Right cardiac atrium (tissue), 5 donors: ENCODE measurements at regions of chr7 and their contacts with region 1.

Region 1: DNA sequence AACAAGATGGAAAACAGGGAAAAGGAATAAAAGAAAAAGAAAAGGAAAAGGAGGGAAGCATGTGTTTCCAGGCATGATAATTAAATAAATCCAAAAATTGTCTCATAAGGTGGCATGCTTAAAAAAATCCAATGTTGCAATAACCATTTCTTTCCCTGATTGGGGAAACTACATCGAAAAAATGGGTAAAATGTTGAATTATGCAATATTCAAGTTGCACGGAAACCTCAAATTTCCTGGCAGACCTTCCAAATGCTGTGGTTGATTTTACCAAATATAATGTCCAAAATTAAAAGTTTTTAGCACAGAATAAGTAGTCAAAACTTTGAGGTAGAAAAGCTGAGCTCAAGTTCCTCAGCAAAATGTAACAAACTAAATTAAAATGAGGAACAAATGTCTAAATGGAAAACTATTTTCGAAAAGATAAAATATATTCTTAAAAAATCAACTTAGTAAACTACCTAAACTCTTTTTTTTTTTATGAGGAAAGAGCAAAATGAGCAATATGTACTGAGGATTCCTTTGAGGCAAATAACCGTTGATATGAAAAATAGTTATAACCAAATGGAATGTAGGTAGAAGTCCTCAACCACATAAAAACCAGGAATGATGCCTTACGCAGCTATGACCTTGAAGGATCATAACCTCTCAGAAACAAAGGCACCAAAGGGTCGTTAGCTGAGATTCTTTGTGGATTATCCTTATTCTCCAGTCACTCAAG is 52.6 kb downstream of the MACC1 start:
- DNase-seq: no peak
- ATAC-seq: no peak
- H3K4me3 ChIP-seq: no peak overlapping the region
- H3K27ac ChIP-seq: peak overlapping the region; percentile 7
- H3K4me1 ChIP-seq: no peaks in the 10 kb centered on the region
- H3K27me3 ChIP-seq: no peaks in the 10 kb centered on the region

Region 2: GRCh38 chr7:19939746-19940145 is 224.8 kb before region 1 on chr7:
- intact Hi-C with region 1: no loop called
- DNase-seq: no peak
- ATAC-seq: no peak
- H3K4me3 ChIP-seq: no peak overlapping the region
- H3K27ac ChIP-seq: no peak overlapping the region
- H3K4me1 ChIP-seq: no peaks in the 10 kb centered on the region
- H3K27me3 ChIP-seq: no peaks in the 10 kb centered on the region

Region 3: DNA sequence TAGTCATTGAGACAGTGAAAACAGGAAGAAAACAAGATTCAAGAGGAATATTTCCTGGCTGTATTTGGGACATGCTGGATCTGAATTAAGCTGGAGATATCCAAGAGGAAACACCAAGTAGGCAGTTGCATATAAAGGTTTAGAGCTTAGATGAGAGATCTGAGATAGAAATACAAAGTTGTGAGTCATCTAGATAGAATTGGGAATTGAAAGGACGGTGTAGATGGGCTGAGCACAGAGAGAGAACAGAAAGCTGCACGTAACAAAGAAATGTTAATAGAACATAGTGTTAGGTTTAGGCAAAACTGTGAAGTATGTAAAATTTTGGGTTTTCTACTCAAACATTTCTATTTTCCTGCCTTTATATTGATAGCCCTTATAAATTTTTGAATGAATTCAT is 172.6 kb before region 1 on chr7:
- intact Hi-C with region 1: no loop called
- DNase-seq: no peak
- ATAC-seq: no peak
- H3K4me3 ChIP-seq: no peak overlapping the region
- H3K27ac ChIP-seq: no peak overlapping the region
- H3K4me1 ChIP-seq: no peaks in the 10 kb centered on the region
- H3K27me3 ChIP-seq: no peaks in the 10 kb centered on the region

Region 4: DNA sequence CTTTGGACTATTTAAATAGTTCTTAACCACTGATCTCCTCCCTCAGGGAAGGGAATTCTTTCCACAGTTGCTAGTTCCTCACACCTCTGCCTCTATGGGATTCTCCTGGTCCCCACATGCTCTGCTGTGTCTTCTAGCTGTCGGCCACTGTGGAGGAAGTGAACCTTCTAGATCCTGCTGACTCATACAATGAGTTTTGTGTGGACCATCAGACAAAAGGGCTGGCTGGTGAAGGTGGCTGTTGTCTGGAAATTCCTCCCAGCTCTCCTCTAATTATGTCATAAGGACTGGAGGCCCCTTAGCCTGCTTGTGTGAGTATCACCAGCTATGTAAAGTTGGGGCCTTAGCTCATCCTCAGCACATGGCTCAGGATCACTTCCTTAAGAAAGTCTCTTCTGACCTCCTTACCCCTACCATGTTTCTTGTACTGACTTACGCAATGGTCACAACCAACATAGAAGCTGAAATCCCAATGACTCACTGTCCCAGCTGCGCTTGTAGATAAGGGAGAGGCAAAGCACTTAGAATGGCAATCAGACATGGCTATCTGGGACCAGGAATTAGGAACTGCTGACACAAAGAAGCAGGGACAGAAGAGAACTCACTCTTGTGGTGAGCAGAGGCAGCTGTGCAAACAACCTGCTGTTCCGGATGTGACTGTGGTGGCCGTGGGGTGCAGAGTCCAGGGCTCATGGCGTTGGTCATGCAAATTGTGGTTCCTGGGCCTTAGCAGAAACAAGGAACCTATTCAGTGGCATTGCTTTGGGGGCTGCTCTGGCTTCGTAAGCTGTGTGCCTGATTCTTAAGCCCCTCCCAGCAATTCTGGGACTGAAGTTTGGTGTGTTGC is 55.1 kb after region 1 on chr7:
- intact Hi-C with region 1: loop called in 1 of 4 experiments (anchors 2 kb)
- DNase-seq: peak; percentile 63 to 81 (median 78)
- ATAC-seq: peak; percentile 93 to 95
- H3K4me3 ChIP-seq: no peak overlapping the region
- H3K27ac ChIP-seq: peak overlapping the region; percentile 62
- H3K4me1 ChIP-seq: no peaks in the 10 kb centered on the region
- H3K27me3 ChIP-seq: no peaks in the 10 kb centered on the region

Region 5: DNA sequence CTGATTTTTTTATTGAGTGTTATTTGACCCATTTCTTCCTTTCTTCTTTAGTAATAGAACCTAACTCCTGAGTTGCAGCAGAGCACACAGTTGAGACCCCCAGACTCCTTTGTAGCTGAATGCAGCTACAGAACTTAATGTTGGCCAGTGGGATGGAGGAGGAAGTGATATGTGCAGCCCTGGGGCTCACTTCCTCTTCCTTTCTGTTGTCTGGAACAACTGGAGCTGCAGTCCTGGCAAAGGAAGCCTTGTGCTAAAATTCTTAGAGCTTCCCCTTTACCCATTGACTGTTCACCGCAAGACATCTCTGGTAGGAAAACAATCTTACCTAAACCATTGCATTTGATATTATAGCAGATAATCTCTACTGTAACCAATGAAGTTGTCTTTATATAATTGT is 252.7 kb after region 1 on chr7:
- intact Hi-C with region 1: no loop called
- DNase-seq: no peak
- ATAC-seq: peak in 1 of 2 donors; percentile 40
- H3K4me3 ChIP-seq: no peak overlapping the region
- H3K27ac ChIP-seq: no peak overlapping the region
- H3K4me1 ChIP-seq: no peaks in the 10 kb centered on the region
- H3K27me3 ChIP-seq: no peaks in the 10 kb centered on the region